ENCODE measurements at regions of chr15 and their contacts with region 1.

Region 1: DNA sequence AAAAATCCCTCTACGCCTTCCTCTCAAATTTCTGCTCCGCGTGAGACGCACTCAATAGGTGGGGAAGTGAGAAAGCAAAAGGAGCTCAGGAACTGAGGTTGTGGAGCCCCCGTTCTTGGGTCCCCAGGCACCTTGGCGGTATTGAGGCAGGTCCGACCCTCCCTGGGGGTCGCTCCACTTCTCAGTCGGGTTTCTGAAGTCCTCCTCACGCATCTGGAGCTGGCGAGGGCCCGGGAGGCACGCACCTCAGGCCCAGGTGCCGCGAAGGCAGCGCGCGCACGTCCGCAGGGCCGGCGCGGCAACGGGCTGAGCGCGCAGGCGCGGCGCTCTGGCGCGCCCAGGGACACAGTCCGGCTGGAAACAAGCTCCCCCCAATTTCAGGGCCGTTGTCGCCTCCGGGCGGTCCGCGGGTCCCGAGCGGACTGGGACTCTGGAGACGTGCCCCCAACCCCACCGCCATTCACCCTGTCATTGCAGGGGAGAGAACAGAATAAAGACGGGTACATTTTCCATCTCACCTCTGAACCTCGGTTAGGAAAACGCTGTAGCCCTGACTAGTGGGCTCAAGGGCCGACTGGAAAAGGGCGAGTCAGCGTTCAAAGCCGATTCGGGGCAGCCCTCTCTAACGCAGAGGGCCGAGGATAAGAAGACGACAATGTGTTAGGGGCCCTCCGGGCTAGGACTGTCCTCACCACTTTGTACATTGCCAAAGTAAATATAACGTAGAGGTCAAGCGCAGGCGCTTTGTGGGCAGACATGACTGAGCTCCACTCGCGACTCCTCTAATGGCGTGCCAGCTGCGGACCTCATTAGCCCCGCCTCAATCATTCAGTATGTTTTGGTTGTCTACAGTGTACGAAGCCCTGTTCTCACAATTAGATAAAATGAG is at the start of gene ZNF770:
- DNase-seq: peak; percentile 51
- ATAC-seq: peak; percentile 88
- H3K4me3 ChIP-seq: peak within 1 kb of the TSS; percentile 72 to 99
- H3K27ac ChIP-seq: peak within 1 kb of the TSS; percentile 90
- H3K4me1 ChIP-seq: peaks cover 25 to 47% of the 10 kb centered on the region in 2 experiments
- H3K27me3 ChIP-seq: no peaks in the 10 kb centered on the region
- CTCF ChIP-seq: no peak
- POLR2A ChIP-seq: peak; percentile 80
- RAD21 ChIP-seq: no peak
- total RNA-seq, gene ZNF770: 70.7 TPM

Region 2: DNA sequence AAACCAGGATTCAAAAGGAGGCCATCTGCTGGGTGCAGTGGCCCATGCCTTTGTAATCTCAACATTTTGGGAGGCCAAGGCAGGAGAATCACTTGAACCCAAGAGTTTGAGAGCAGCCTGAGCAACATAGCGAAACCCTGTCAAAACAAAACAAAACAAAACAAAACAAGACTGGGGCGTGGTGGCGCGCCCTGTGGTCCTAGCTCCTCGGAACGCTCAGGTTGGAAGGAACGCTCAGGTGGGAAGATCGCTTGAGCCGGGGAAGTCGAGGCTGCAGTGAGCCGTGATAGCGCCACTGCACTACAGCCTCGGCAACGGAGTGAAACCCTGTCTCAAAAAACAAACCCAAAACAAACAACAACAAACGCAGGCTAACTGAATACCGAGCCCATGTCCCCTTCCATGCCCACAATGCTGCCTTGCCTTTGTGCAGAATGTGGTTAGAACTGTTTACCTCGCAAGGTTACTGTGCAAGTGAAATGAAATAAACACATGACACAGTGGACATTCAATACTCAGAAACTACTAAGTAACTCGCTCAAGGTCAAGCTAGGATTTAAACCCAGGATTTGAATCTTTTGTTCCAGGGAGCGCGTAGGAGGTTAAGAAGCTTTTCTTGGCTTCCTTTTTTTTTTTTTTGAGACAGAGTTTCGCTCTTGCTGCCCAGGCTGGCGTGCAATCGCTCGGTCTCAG is 764.2 kb before region 1 on chr15:
- CTCF ChIA-PET with region 1: no interaction called
- POLR2A ChIA-PET with region 1: no interaction called
- RAD21 ChIA-PET with region 1: no interaction called
- intact Hi-C with region 1: loop called (anchors 10 kb)
- DNase-seq: no peak
- ATAC-seq: no peak
- H3K4me3 ChIP-seq: peak overlapping the region; percentile 76 to 100
- H3K27ac ChIP-seq: peak overlapping the region; percentile 95
- H3K4me1 ChIP-seq: peaks cover 12 to 15% of the 10 kb centered on the region in 2 experiments; a peak in 3 of 4 replicates
- H3K27me3 ChIP-seq: no peaks in the 10 kb centered on the region
- CTCF ChIP-seq: no peak
- POLR2A ChIP-seq: no peak
- RAD21 ChIP-seq: no peak

Region 3: DNA sequence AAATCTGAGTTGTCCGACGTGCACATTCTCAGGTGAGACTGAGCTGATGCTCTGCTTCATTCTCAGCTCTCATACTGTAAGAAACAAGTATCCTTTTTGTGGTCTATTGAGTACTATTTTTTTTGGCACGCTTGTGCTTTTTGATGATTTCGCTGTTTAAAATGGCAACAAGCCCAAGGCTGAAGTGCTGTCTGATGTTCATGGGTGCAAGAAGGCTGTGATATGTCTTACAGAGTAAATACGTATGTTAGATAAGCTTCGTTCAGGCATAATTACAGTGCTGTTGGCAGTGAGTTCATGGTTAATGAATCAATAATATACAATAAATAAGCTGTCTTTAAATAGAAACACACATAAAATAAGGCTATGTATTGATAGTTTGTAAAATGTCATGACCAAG is 45.9 kb before region 1 on chr15:
- CTCF ChIA-PET with region 1: no interaction called
- POLR2A ChIA-PET with region 1: no interaction called
- RAD21 ChIA-PET with region 1: no interaction called
- intact Hi-C with region 1: no loop called
- DNase-seq: no peak
- ATAC-seq: no peak
- H3K4me3 ChIP-seq: no peak overlapping the region
- H3K27ac ChIP-seq: no peak overlapping the region
- H3K4me1 ChIP-seq: no peaks in the 10 kb centered on the region
- H3K27me3 ChIP-seq: no peaks in the 10 kb centered on the region
- CTCF ChIP-seq: no peak
- POLR2A ChIP-seq: no peak
- RAD21 ChIP-seq: no peak

Region 4: DNA sequence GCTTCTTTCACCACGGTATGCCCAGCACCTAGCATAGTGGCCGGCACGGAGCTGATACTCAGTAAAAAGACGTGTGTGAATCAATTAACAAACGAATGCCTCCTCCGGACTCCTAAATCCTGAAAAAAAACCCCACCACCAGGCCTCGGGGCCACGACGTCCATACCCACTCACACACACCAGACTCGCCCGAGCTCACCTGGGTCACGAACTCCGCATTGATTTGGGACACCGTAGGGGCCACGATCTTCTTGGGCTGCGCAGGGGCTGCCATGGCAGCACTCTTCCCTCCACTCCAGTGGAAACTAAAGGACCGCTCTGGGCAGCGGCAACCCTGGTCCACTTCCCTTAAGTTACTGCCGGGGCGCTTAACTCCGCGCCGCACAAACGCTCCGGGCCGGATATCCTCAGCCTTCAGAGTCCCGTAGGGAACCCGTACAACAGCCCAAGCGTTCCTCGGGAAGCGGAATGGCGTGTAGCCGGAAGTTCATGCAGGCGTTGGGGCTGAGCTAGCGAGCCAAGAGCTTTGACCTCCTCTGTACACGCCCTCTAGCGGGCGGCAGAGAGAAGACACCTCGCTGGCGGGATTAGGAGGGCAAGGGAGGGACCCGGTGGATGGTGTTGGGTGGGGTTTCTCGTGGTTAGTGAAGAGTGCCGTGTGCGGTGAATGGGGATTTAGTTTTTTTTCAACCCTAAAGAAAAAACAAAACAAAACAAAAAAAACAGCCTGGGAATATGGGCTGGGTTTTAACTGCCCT is 18.7 kb before region 1 on chr15 and contains the start of gene AQR:
- CTCF ChIA-PET with region 1: interaction called, 28 read pairs
- POLR2A ChIA-PET with region 1: interaction called, 19 read pairs
- RAD21 ChIA-PET with region 1: interaction called in 1 of 2 experiments, 3 read pairs
- intact Hi-C with region 1: loop called (anchors 1 kb)
- DNase-seq: peak; percentile 96
- ATAC-seq: peak; percentile 99
- H3K4me3 ChIP-seq: peak within 1 kb of the TSS; percentile 97 to 100
- H3K27ac ChIP-seq: peak within 1 kb of the TSS; percentile 65
- H3K4me1 ChIP-seq: peaks cover 7 to 14% of the 10 kb centered on the region in 2 experiments; a peak in 2 of 4 replicates
- H3K27me3 ChIP-seq: no peaks in the 10 kb centered on the region
- CTCF ChIP-seq: peak; percentile 41 to 95 (median 90); a peak in 5 of 6 replicates
- POLR2A ChIP-seq: peak; percentile 53
- RAD21 ChIP-seq: no peak; the same call in none of the 2 replicates
- total RNA-seq, gene AQR: 30.7 TPM

Region 5: DNA sequence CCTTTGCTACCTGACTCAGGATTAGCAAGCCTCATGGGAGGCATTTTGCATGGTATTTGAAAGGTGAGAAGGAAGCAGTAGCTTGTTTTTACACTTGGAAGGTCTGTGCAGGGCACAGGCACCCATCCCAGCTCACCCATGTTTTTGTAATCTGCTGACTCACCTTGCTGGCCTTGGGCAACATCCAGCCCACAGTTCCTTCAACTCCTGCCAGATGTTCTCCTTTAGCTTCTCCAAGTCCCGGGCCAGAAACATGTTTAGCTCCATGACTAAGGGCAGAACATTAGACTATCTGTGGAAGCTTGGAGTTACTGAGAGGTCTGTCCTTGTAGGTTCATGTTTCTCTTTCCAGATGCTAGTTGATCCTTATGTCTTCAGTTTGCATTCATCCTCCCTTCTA is 12.3 kb after region 1 on chr15:
- CTCF ChIA-PET with region 1: interaction called, 3 read pairs
- POLR2A ChIA-PET with region 1: interaction called, 11 read pairs
- RAD21 ChIA-PET with region 1: no interaction called
- intact Hi-C with region 1: no loop called
- DNase-seq: peak; percentile 76
- ATAC-seq: peak; percentile 93
- H3K4me3 ChIP-seq: peak overlapping the region in 1 of 2 experiments; percentile 35; a peak in 2 of 4 replicates
- H3K27ac ChIP-seq: peak overlapping the region; percentile 66
- H3K4me1 ChIP-seq: peaks cover 10 to 14% of the 10 kb centered on the region in 2 experiments
- H3K27me3 ChIP-seq: no peaks in the 10 kb centered on the region
- CTCF ChIP-seq: no peak
- POLR2A ChIP-seq: no peak
- RAD21 ChIP-seq: no peak

Region 6: DNA sequence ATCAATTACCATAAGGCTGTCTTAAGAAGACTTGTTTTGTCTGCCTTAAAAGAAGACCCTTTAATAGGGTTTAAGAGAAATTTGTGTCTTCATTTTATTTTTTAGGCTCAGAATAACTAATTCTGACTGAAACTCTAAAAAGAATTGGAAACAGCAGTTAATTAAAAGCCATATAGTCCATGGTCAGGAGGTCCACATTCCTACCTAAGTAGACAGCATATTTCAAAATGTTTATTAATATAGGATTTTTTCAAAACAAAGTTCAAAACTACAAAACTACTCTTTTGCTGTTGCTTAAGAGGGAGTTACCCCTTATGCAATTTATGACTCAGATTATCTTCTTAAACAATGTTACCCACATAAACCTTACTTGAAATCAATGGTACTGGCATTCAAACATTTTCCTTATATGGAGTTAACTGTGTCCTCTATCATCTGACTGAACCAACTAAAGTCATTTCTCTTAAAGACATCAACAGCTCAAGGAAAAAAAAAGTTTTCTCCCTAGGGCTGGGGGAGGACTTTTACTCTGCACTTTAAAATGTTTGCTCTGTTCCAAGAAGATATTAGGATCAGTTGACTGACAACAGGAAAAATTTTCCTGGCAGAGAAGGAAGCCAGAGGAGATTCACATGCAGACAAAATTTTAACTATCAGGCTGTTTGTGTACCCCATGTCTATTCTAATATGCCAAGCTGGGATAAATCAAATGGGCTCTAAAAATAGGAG is 153.7 kb after region 1 on chr15:
- CTCF ChIA-PET with region 1: no interaction called
- POLR2A ChIA-PET with region 1: no interaction called
- RAD21 ChIA-PET with region 1: no interaction called
- intact Hi-C with region 1: no loop called
- DNase-seq: no peak
- ATAC-seq: no peak
- H3K4me3 ChIP-seq: no peak overlapping the region
- H3K27ac ChIP-seq: no peak overlapping the region
- H3K4me1 ChIP-seq: no peaks in the 10 kb centered on the region
- H3K27me3 ChIP-seq: no peaks in the 10 kb centered on the region
- CTCF ChIP-seq: no peak
- POLR2A ChIP-seq: no peak
- RAD21 ChIP-seq: no peak